Right cardiac atrium (tissue), 5 donors: ENCODE measurements at regions of chr21 and their contacts with region 1.

Region 1: GRCh38 chr21:27532076-27532475 is 565.2 kb upstream of the ADAMTS5 start:
- DNase-seq: no peak
- ATAC-seq: no peak
- H3K4me3 ChIP-seq: no peak overlapping the region
- H3K27ac ChIP-seq: no peak overlapping the region
- H3K4me1 ChIP-seq: no peaks in the 10 kb centered on the region
- H3K27me3 ChIP-seq: no peaks in the 10 kb centered on the region

Region 2: GRCh38 chr21:27423038-27423437 is 109.0 kb before region 1 on chr21:
- intact Hi-C with region 1: no loop called
- DNase-seq: peak; percentile 76 to 88 (median 79)
- ATAC-seq: peak; percentile 90 to 92
- H3K4me3 ChIP-seq: no peak overlapping the region
- H3K27ac ChIP-seq: no peak overlapping the region
- H3K4me1 ChIP-seq: peaks cover 4% of the 10 kb centered on the region
- H3K27me3 ChIP-seq: no peaks in the 10 kb centered on the region

Region 3: DNA sequence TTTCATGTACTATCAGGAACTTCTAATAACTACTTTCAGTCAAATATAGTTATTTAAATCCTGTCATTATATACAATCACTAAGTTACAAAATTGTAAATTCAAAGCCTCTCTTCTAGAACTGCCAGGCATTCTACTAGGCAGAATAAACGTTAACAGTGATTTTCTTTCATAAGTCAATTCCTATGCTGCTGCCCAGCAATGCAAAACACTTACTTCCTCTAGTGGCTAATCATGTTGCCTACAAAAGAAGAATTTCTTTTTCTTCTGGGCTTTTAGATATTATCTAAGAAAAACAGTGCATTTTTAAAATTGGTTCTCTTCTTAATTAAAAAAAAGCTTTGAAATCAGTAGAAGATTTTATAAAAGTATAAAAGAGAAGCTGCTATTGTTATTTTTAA is 55.4 kb before region 1 on chr21:
- intact Hi-C with region 1: loop called in 1 of 4 experiments (anchors 10 kb)
- DNase-seq: no peak
- ATAC-seq: peak in 1 of 2 donors; percentile 60
- H3K4me3 ChIP-seq: no peak overlapping the region
- H3K27ac ChIP-seq: no peak overlapping the region
- H3K4me1 ChIP-seq: no peaks in the 10 kb centered on the region
- H3K27me3 ChIP-seq: no peaks in the 10 kb centered on the region

Region 4: GRCh38 chr21:27570306-27570868 is 38.3 kb after region 1 on chr21:
- intact Hi-C with region 1: no loop called
- DNase-seq: peak; percentile 79 to 91 (median 80)
- ATAC-seq: peak; percentile 86 to 96
- H3K4me3 ChIP-seq: no peak overlapping the region
- H3K27ac ChIP-seq: no peak overlapping the region
- H3K4me1 ChIP-seq: peaks cover 6% of the 10 kb centered on the region
- H3K27me3 ChIP-seq: no peaks in the 10 kb centered on the region

Region 5: DNA sequence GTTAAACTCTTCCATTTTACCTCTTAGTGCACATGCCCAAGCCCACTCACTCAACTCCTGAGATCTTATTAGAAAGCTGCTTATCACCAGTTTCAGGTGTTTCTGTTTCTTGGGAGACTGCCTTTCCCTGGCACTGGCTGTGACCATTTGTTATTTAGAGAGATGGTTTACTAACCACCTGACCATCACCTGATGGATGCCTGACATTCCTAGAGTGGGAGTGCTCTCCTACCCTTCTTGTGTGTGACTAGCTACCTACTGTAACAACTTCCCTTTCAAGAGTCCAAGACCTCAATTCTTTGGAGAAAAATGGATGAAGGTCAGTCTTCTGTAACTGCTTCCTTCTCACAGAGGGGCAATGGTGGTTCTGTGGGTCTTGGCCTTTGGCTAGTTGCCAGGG is 190.0 kb after region 1 on chr21:
- intact Hi-C with region 1: no loop called
- DNase-seq: no peak
- ATAC-seq: no peak
- H3K4me3 ChIP-seq: no peak overlapping the region
- H3K27ac ChIP-seq: no peak overlapping the region
- H3K4me1 ChIP-seq: no peaks in the 10 kb centered on the region
- H3K27me3 ChIP-seq: no peaks in the 10 kb centered on the region